Endothelial cell of umbilical vein (primary cell): ENCODE measurements at regions of chr6 and their contacts with region 1.

Region 1: DNA sequence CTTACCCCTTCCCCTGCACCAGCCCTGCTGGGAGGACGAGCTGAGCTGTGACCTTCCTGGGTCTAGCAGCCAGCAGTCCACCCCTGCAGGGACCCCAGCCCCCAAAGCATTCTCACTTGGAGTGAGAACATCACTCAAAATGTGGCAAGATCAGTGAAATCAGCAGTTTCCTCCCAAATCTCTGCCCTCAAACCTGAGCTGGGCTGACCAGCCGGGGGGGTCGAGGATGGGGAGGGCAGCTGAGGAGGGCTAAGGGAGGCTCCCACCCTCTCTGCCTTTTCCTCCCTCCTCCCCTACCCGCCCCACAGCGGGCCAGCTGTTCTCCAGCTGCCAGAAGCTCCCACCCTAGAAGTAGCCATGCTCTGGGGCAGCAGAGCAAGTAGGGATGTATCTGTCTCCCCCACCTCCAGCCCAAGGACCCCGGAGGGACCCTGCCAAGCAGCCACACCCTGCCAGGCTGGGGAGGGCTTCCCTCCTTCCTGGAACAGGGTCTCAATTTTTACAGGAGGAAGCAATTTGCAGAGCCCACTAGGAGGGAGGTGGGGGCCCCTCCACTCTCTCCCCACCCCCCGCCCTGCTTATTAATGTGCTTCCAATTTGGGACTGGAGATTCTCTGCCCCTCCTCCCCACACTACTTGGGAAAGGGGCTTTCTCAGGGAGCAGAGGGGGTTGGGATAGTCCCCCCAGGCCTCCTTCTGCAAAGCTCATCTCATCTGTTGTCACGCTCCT is 4.7 kb downstream of the TEAD3 start:
- DNase-seq: no peak
- H3K4me3 ChIP-seq: no peak overlapping the region
- H3K27ac ChIP-seq: no peak overlapping the region
- H3K4me1 ChIP-seq: no peaks in the 10 kb centered on the region
- H3K27me3 ChIP-seq: peaks cover 9 to 10% of the 10 kb centered on the region in 2 experiments
- CTCF ChIP-seq: no peak
- POLR2A ChIP-seq: no peak

Region 2: GRCh38 chr6:35468181-35468979 is 23.8 kb before region 1 on chr6 and contains the start of gene RPL10A:
- CTCF ChIA-PET with region 1: interaction called, 3 read pairs
- POLR2A ChIA-PET with region 1: no interaction called
- dilution Hi-C with region 1: no loop called
- intact Hi-C with region 1: loop called (anchors 2 kb)
- DNase-seq: peak; percentile 97
- H3K4me3 ChIP-seq: peak within 1 kb of the TSS; percentile 69 to 95 (median 92)
- H3K27ac ChIP-seq: peak within 1 kb of the TSS; percentile 76
- H3K4me1 ChIP-seq: peaks cover 26% of the 10 kb centered on the region
- H3K27me3 ChIP-seq: no peaks in the 10 kb centered on the region
- CTCF ChIP-seq: peak; percentile 99 to 100
- POLR2A ChIP-seq: peak; percentile 100
- total RNA-seq, gene RPL10A: 1,327 and 1,339 TPM in 2 replicates